AG04449 (cell line): ENCODE measurements at regions of chr17 and their contacts with region 1.

Region 1: GRCh38 chr17:80029258-80029974 is 6.3 kb downstream of the TBC1D16 start:
- DNase-seq: peak; percentile 16
- H3K4me3 ChIP-seq: no peak overlapping the region
- CTCF ChIP-seq: no peak

Region 2: DNA sequence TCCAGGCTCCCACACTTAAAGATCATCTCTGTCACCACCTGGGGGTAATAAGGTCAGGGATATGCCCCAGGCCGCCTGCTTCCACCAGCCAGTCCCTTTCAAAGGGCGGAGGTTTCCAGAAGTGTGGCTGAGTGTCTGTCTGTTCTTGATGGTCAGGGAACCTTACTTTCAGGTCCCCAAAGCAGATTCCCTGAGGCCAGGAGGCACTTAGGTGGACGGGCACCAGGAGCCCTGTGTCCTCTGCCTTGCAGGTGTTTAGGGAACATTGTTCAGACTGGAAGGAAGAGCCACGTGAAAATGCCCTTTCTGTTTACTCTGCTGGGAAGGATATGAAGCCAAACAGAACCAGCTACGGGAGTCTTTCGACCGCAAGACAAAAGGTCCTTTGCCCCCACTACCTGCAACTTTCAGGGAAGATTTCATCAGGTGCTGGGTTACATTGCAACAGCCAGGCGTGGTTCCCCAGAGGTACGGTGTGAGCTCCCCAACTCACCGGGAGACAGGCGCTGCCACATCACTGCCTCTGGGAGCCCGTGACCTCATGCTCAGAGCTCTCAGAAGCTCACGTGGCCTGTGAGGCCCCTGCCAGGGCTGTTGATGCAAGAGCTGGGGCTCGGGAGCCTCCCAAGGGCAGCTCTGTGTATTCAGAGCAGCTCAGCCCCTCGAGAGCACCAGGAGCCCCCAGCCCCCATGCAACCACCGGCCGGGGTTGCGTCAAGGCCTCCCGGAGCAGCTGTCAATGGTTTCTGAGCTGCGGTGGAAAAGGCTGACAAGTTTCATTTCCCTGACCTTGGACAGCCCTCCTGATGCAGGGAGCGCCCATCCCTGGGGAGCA is 36.0 kb before region 1 on chr17:
- CTCF ChIA-PET with region 1: no interaction called
- POLR2A ChIA-PET with region 1: no interaction called
- DNase-seq: peak; percentile 63
- H3K4me3 ChIP-seq: no peak overlapping the region
- CTCF ChIP-seq: no peak

Region 3: GRCh38 chr17:80018917-80019651 is 10.3 kb before region 1 on chr17:
- CTCF ChIA-PET with region 1: interaction called, 29 read pairs
- POLR2A ChIA-PET with region 1: interaction called, 3 read pairs
- DNase-seq: no peak
- H3K4me3 ChIP-seq: no peak overlapping the region
- CTCF ChIP-seq: no peak

Region 4: DNA sequence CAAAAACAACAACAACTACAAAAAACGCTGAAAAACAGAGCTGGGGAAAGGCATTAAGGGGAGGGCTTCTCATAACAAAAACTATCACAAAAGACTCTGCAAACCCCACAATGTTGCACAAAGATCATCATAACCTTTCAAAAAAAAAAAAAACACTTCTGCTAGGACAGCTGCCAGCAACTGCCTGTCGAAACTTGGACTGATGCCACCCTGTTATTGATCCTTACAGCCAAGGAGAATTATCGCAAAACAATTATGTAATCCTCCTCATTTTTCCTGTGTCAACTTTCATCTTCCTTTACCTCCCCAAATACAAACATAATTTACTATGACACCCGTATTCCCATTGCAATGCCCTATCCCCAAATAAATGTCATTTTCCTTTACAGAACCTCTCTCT is 16.3 kb after region 1 on chr17:
- CTCF ChIA-PET with region 1: no interaction called
- POLR2A ChIA-PET with region 1: no interaction called
- DNase-seq: no peak
- H3K4me3 ChIP-seq: no peak overlapping the region
- CTCF ChIP-seq: no peak

Region 5: DNA sequence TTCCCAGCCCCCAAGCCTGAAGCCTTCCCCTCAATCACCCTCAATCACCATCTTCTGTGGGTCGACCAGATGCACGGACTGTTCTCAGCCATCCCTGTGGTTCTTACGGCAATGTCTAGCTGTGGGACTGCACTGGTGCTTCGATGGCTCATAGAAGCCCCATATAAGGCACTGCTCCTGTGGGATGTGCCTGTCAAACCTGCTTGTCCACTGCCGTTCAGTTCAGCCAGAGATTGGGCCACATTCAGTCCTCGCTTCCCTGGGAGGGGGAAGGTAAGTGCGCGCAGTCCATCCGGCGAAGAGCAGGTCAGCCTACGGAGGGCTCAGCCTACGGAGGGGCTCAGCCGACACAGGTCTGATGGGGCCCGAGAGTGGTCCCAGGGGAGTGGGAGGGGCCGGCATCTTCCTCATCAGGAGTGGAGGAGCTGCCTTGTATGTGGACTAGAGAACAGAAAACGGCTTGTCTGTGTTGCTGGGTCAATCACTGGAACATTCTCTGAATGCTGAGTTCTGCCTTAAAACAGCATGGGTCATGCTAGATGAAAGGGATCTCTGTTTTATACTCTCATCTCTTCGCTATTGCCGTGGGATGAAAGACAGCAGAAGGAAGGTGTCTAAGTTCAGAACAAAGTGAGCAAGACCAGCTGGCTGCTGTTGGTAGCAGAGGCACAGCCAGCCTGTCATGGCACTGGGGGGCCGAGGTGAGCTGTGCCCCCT is 140.5 kb after region 1 on chr17 and contains the start of gene CARD14:
- CTCF ChIA-PET with region 1: no interaction called
- POLR2A ChIA-PET with region 1: no interaction called
- DNase-seq: no peak
- H3K4me3 ChIP-seq: no peak within 1 kb of the TSS
- CTCF ChIP-seq: no peak